K562 (cell line): ENCODE measurements at regions of chr16 and their contacts with region 1.

Region 1: GRCh38 chr16:58187092-58187491 is 10.8 kb downstream of the CSNK2A2 start:
- DNase-seq: no peak
- ATAC-seq: no peak
- H3K4me3 ChIP-seq: no peak overlapping the region
- H3K27ac ChIP-seq: no peak overlapping the region
- H3K4me1 ChIP-seq: no peaks in the 10 kb centered on the region
- H3K27me3 ChIP-seq: no peaks in the 10 kb centered on the region
- CTCF ChIP-seq: no peak
- EP300 ChIP-seq: no peak
- POLR2A ChIP-seq: no peak
- RAD21 ChIP-seq: no peak

Region 2: GRCh38 chr16:58148526-58148925 is 38.6 kb before region 1 on chr16:
- CTCF ChIA-PET with region 1: no interaction called
- POLR2A ChIA-PET with region 1: no interaction called
- in situ Hi-C with region 1: no loop called
- intact Hi-C with region 1: no loop called
- DNase-seq: no peak
- ATAC-seq: peak; percentile 34; the same call in 1 of the 3 replicates
- H3K4me3 ChIP-seq: no peak overlapping the region
- H3K27ac ChIP-seq: no peak overlapping the region
- H3K4me1 ChIP-seq: no peaks in the 10 kb centered on the region; a peak in 1 of 5 replicates
- H3K27me3 ChIP-seq: no peaks in the 10 kb centered on the region; a peak in 1 of 5 replicates
- CTCF ChIP-seq: no peak
- EP300 ChIP-seq: no peak
- POLR2A ChIP-seq: no peak
- RAD21 ChIP-seq: no peak

Region 3: DNA sequence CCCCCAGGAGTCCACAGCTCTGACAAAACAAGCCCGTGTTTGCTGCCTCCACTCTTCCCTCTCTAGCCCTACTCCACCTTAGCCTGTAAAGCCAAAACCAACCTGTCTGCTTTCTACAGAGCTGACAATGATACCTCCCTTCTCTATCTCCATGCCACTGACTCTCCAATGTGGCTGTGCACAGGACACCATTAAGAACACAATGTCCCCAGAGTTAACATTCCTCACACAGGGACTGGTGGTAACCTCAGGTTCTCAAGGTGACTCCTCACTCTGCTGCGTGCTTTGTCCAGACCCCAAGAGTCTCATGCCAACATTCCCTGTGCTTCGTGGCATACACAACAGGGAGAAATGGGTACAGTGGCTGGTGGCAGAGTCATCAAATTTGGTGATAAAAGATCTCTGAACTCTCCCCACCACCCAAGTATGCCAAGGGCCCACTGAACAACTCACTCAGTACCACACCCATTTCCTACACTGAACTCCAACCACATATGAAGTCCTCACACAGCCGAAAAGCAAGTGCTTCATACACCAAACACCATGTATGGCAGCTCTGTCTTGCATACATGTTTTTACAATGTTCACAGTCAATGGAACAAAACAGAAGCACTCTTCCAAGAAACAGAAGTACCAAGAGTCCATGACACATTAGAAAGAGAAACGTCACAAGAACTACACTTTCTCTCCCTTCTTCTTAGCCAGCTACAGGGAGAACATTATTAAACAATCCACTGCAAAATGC is 10.3 kb before region 1 on chr16:
- CTCF ChIA-PET with region 1: no interaction called
- POLR2A ChIA-PET with region 1: interaction called, 12 read pairs
- in situ Hi-C with region 1: no loop called
- intact Hi-C with region 1: no loop called
- DNase-seq: no peak
- ATAC-seq: no peak
- H3K4me3 ChIP-seq: no peak overlapping the region
- H3K27ac ChIP-seq: no peak overlapping the region
- H3K4me1 ChIP-seq: peaks cover 0 to 2% of the 10 kb centered on the region in 2 experiments; a peak in 1 of 5 replicates
- H3K27me3 ChIP-seq: no peaks in the 10 kb centered on the region
- CTCF ChIP-seq: no peak
- EP300 ChIP-seq: no peak
- POLR2A ChIP-seq: no peak
- RAD21 ChIP-seq: no peak

Region 4: GRCh38 chr16:58198022-58198683 is 11.1 kb after region 1 on chr16 and contains the start of gene CSNK2A2:
- CTCF ChIA-PET with region 1: no interaction called
- POLR2A ChIA-PET with region 1: interaction called, 11 read pairs
- in situ Hi-C with region 1: no loop called
- intact Hi-C with region 1: no loop called
- DNase-seq: peak; percentile 86 to 96 (median 96)
- ATAC-seq: peak; percentile 97
- H3K4me3 ChIP-seq: peak within 1 kb of the TSS; percentile 64
- H3K27ac ChIP-seq: peak within 1 kb of the TSS; percentile 66
- H3K4me1 ChIP-seq: peaks cover 13 to 17% of the 10 kb centered on the region in 2 experiments; a peak in 4 of 5 replicates
- H3K27me3 ChIP-seq: no peaks in the 10 kb centered on the region; a peak in 1 of 5 replicates
- CTCF ChIP-seq: peak in 2 of 3 experiments; percentile 58 to 61; a peak in 3 of 6 replicates
- EP300 ChIP-seq: no peak
- POLR2A ChIP-seq: peak; percentile 62
- RAD21 ChIP-seq: no peak
- polyA plus RNA-seq, gene CSNK2A2: 23.4 to 25.2 TPM

Region 5: DNA sequence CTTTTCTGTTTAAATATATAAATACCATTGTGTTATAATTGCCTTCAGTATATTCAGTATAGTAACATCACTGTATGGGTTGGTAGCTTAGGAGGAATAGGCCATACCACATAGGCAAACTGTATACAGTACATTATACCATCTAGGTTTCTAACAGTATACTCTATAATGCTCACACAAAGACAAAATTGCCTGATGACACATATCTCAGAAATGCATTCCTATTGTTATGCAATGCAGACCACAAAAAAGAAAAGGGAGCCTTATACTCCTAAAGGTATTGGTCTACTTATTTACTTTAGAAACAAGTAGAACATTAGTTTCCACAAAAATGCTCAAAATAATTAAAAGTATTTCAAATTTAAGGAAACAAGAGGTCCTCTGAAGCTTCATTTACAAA is 376.1 kb after region 1 on chr16:
- CTCF ChIA-PET with region 1: no interaction called
- POLR2A ChIA-PET with region 1: no interaction called
- in situ Hi-C with region 1: no loop called
- intact Hi-C with region 1: no loop called
- DNase-seq: no peak
- ATAC-seq: no peak
- H3K4me3 ChIP-seq: no peak overlapping the region
- H3K27ac ChIP-seq: no peak overlapping the region
- H3K4me1 ChIP-seq: no peaks in the 10 kb centered on the region
- H3K27me3 ChIP-seq: no peaks in the 10 kb centered on the region
- CTCF ChIP-seq: no peak
- EP300 ChIP-seq: no peak
- POLR2A ChIP-seq: no peak
- RAD21 ChIP-seq: no peak